Activated B cell treated with CpG ODN at 0.5 μM for 24 hours (primary cell): ENCODE measurements at regions of chr7 and their contacts with region 1.

Region 1: GRCh38 chr7:98434095-98434494 is 33.2 kb upstream of the BAIAP2L1 start:
- DNase-seq: no peak
- ATAC-seq: no peak
- H3K4me3 Mint-ChIP-seq: no peak overlapping the region
- H3K27ac Mint-ChIP-seq: no peak overlapping the region
- H3K4me1 Mint-ChIP-seq: peaks cover 10% of the 10 kb centered on the region
- H3K27me3 Mint-ChIP-seq: peaks cover 14% of the 10 kb centered on the region
- CTCF ChIP-seq: no peak

Region 2: DNA sequence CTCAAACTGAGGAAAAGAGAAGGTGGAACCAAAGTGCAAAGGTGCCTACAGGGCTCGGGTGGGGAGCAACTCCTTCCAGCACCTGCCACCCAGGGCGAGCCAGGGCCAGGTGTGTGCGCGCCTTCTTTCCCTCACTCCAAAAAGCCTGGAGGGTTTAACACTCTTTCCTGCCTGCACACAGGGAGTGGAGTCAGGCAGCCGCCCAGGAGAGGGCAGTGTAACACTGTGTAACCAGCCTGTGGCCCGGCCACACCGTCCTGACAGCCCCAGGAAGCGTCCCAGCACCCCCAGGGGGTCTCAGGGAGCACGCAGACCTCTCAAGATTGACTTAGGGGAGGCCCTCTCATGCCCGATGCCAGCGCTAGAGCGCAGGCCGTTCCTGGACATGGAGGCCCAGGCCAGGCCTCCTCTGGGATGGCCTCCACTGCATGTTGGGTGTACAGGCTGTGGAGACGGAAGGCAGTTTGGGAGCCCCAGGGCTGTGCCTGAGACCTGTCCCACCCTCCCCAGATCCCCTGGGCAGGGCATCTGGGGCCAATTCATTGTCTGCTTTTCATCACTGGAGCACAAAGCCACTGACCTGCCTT is 139.2 kb before region 1 on chr7:
- CTCF ChIA-PET with region 1: no interaction called
- POLR2A ChIA-PET with region 1: no interaction called
- intact Hi-C with region 1: loop called (anchors 1 kb)
- DNase-seq: peak; percentile 49
- ATAC-seq: peak; percentile 79
- H3K4me3 Mint-ChIP-seq: no peak overlapping the region
- H3K27ac Mint-ChIP-seq: no peak overlapping the region
- H3K4me1 Mint-ChIP-seq: no peaks in the 10 kb centered on the region
- H3K27me3 Mint-ChIP-seq: no peaks in the 10 kb centered on the region
- CTCF ChIP-seq: no peak

Region 3: DNA sequence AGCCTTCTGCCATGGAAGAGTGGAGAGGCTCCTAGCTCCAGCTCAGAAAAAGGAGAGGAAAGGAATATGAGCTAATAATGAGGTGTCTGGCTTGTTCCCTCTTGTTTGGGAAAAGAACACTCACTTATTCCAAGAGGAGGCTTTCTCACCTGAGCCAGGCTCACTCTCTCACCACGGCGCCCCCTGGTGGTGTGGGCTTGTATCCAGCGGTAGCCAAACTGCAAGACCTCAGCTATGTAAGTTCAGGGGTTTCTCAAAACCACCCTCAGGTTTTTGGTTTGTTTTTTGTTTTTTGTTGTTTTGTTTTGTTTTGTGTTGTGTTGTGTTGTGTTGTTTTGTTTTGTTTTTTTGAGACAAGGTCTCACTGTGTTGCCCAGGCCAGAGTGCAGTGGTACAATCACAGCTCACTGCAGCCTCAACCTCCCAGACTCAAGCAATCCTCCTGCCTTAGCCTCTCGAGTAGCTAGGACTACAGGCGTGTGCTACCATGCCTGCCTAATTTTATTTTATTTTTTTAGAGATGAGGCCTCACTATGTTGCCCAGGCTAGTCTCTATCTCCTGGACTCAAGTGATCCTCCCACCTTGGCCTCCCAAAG is 311.7 kb after region 1 on chr7:
- CTCF ChIA-PET with region 1: interaction called, 10 read pairs
- POLR2A ChIA-PET with region 1: no interaction called
- intact Hi-C with region 1: loop called (anchors 1 kb)
- DNase-seq: peak; percentile 62
- ATAC-seq: peak; percentile 31
- H3K4me3 Mint-ChIP-seq: no peak overlapping the region
- H3K27ac Mint-ChIP-seq: no peak overlapping the region
- H3K4me1 Mint-ChIP-seq: no peaks in the 10 kb centered on the region
- H3K27me3 Mint-ChIP-seq: peaks cover 12% of the 10 kb centered on the region
- CTCF ChIP-seq: peak; percentile 87

Region 4: DNA sequence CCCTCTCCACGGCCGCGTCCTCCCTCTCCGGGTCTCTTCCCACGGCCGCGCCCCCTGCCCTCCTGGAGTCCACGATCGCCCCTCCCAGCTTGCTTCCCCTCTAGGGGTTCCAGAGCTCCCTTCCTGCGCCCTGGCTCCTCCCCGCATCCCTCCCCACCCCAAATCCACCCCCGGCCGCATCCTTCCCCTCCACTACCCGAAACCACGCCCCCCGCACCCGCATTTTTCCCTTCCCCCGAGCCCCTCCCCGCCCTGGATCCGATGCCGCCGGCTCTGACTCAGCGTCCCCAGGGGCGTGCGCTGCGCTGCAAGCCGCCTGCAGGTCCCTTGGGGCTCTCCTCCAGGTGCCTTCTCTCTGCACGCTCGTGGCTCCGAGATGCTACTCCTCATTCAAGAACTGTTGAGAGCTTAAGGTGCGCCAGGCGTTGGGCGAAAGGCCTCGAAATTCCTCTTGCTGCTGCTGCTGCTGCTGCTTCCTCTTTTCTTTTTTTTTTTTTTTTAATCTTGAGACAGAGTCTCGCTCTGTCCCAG is 436.1 kb after region 1 on chr7:
- CTCF ChIA-PET with region 1: no interaction called
- POLR2A ChIA-PET with region 1: no interaction called
- intact Hi-C with region 1: loop called (anchors 1 kb)
- DNase-seq: peak; percentile 85
- ATAC-seq: peak; percentile 98
- H3K4me3 Mint-ChIP-seq: peak overlapping the region; percentile 85
- H3K27ac Mint-ChIP-seq: peak overlapping the region; percentile 63
- H3K4me1 Mint-ChIP-seq: peaks cover 20% of the 10 kb centered on the region
- H3K27me3 Mint-ChIP-seq: peaks cover 5% of the 10 kb centered on the region
- CTCF ChIP-seq: no peak

Region 5: DNA sequence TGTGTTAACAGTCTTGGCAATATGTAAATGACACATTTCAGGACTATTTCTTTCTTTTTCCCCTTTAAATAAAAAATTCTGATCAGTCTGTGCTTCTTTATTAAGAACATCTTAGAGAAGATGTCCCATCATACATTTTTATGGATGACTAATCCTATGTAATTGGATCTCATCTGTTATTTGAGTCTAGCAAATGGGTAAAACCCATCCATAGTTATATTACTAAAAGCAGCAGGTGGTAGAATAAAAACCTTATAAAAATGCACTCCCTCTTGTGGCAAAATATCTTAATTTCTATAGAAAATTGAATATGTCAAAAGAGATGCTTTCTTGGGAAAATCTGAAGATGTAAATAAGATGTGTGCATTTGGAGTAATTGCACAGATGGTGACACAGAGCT is 479.5 kb after region 1 on chr7:
- CTCF ChIA-PET with region 1: no interaction called
- POLR2A ChIA-PET with region 1: no interaction called
- intact Hi-C with region 1: loop called (anchors 1 kb)
- DNase-seq: no peak
- ATAC-seq: no peak
- H3K4me3 Mint-ChIP-seq: no peak overlapping the region
- H3K27ac Mint-ChIP-seq: no peak overlapping the region
- H3K4me1 Mint-ChIP-seq: no peaks in the 10 kb centered on the region
- H3K27me3 Mint-ChIP-seq: no peaks in the 10 kb centered on the region
- CTCF ChIP-seq: no peak

Region 6: DNA sequence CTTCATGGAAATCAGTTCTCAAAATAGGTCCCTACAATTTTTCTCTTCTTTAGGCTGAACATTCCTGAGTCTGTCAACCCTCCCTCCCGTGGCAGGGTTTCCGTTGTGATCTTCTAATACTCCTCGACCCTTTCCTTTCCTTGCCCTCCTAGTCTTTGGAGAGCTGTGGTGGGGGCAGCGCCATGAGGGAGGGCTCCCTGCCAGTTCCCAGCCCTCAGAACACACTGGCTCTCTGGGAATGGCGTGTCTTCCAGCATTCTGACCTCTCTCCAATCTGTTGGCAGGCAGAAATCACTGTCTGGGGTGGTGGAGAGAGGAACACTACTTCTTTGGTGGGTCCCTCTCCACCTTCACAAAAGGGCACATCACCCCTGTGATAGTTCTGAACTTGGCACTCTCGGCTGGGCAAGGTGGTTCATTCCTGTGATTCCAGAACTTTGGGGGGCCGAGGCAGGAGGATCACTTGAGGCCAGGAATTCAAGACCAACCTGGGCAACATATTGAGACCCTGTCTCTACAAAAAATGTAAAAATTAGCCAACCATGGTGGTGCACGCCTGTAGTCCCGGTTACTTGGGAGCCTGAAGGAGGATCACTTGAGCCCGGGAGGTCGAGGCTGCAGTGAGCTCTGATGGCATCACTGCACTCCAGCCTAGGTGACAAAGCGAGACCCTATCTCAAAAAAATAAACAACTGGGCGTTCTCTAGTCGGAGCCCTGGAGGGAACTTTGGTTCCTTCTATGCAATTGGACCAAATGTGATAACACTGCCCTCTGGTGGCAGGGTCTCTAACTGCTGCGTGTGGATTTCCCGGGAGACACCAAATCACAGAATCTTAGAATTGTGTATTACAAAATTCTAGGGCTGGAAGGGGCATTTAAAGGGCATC is 878.5 kb after region 1 on chr7:
- CTCF ChIA-PET with region 1: no interaction called
- POLR2A ChIA-PET with region 1: no interaction called
- intact Hi-C with region 1: loop called (anchors 1 kb)
- DNase-seq: peak; percentile 53
- ATAC-seq: peak; percentile 71
- H3K4me3 Mint-ChIP-seq: no peak overlapping the region
- H3K27ac Mint-ChIP-seq: no peak overlapping the region
- H3K4me1 Mint-ChIP-seq: peaks cover 2% of the 10 kb centered on the region
- H3K27me3 Mint-ChIP-seq: peaks cover 3% of the 10 kb centered on the region
- CTCF ChIP-seq: peak; percentile 25